Vagina (tissue), 2 donors: ENCODE measurements at regions of chr12 and their contacts with region 1.

Region 1: DNA sequence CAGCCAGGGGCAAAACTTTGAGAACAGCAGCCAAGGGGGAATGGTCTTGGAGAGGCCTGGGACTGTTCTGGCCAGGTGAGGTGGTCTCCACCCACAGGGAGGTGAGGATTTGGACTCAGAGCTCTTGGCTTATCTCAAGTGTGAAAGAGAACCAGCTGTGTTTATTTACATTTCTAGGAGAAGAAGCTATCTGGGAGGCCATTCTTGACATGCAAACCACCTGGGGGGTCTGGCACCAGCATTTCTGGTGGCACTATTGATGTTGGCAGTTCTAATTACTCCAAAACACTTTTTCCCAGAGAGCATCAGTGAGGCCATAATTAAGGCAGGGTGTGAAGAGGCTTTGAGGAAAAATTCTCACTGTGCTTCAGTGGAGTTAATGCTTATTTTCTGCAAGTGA is 95.1 kb downstream of the CAND1 start:
- DNase-seq: no peak
- H3K4me3 ChIP-seq: no peak overlapping the region
- H3K27ac ChIP-seq: no peak overlapping the region
- H3K4me1 ChIP-seq: no peaks in the 10 kb centered on the region
- H3K27me3 ChIP-seq: no peaks in the 10 kb centered on the region
- CTCF ChIP-seq: no peak
- POLR2A ChIP-seq: no peak

Region 2: GRCh38 chr12:67299926-67300325 is 64.3 kb before region 1 on chr12:
- intact Hi-C with region 1: no loop called
- DNase-seq: no peak
- H3K4me3 ChIP-seq: no peak overlapping the region
- H3K27ac ChIP-seq: no peak overlapping the region
- H3K4me1 ChIP-seq: no peaks in the 10 kb centered on the region
- H3K27me3 ChIP-seq: no peaks in the 10 kb centered on the region
- CTCF ChIP-seq: no peak
- POLR2A ChIP-seq: no peak

Region 3: GRCh38 chr12:67943226-67943892 is 579.1 kb after region 1 on chr12:
- intact Hi-C with region 1: loop called (anchors 10 kb)
- DNase-seq: no peak
- H3K4me3 ChIP-seq: no peak overlapping the region
- H3K27ac ChIP-seq: no peak overlapping the region
- H3K4me1 ChIP-seq: no peaks in the 10 kb centered on the region
- H3K27me3 ChIP-seq: no peaks in the 10 kb centered on the region
- CTCF ChIP-seq: peak in 2 of 3 experiments; percentile 60 to 64
- POLR2A ChIP-seq: no peak